Posterior cingulate gyrus (tissue), 11 donors: ENCODE measurements at regions of chr1 and their contacts with region 1.

Region 1: DNA sequence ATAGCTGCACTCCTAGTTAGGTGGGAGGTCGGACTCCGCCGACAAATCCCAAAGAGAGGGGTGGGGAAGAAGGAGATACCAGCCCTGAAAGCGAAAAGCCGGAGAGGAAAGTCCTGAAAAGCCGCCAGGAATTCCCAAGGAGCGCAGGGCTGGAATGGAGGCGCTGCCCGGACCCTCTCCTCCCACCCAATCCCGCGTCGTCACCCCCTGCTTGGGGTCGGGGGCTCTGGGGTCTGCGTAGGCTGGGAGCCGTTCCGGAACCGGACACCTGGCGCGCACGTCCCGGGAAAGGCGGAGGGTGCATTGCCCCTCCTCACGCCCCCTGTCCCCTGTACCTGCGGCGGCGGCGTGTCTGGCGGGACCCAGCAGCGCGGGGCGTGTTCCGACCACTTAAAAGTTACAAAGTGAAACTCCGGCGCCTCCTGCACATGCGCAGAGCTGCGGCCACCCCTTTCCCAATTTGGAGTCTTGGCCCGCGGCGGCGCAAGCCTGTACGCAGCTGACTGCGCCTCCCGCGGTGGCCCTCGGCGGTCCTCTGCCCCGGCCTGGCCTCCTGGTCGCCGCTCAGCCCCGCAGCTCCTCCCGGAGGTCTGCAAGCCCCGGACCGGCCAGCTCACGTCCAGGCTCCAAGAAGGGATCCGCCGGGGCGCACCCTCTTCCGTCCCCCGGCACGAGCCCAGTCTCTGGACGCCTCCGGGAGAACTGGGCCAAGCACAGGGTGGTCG is at the start of gene TMEM63A:
- DNase-seq: peak; percentile 81 to 97 (median 86)

Region 2: DNA sequence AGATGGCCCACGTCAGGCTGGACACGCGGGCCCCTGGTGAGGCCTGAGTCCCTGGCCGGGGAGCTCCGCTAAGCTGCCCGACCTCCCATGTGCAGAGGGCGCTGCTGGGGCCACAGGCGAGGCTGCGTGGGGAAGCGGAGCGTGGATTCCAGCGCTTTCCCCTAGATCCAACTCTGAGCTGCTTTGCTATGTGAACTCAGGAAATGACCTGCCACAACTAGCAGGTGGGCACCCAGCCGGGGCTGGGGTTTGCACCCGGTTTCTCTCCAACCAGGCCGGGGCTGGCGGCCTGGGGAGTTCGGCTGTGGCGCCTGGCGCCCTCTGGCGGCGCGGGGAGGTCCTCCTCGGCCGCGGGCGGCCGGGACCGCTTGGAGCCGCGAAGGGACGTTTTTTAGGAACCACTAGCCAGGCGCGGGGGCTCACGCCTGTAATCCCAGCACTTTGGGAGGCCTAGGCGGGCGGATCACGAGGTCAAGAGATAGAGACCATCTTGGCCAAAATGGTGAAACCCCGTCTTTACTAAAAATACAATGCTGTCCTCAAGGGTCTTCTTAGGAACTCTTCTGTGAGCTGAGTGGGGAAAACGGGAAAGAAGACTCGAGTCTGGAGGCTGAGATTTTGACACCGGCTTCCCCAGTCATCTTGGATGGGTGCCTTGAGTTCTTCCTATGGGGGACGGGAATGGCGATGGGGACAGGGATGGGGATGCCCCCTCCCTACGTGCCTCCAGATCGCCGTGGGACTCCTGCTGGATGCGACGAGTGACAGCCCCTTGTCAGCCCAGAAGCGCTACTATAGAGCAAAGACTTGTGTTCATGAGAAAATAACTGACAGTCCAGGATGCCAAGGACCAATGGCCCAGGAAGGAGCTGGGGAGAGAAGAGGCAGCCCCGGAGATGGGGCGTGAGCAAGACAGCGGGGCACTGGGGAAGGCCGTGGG is 29.3 kb after region 1 on chr1:
- intact Hi-C with region 1: no loop called
- DNase-seq: peak in 6 of 10 donors; percentile 39 to 94 (median 47)

Region 3: DNA sequence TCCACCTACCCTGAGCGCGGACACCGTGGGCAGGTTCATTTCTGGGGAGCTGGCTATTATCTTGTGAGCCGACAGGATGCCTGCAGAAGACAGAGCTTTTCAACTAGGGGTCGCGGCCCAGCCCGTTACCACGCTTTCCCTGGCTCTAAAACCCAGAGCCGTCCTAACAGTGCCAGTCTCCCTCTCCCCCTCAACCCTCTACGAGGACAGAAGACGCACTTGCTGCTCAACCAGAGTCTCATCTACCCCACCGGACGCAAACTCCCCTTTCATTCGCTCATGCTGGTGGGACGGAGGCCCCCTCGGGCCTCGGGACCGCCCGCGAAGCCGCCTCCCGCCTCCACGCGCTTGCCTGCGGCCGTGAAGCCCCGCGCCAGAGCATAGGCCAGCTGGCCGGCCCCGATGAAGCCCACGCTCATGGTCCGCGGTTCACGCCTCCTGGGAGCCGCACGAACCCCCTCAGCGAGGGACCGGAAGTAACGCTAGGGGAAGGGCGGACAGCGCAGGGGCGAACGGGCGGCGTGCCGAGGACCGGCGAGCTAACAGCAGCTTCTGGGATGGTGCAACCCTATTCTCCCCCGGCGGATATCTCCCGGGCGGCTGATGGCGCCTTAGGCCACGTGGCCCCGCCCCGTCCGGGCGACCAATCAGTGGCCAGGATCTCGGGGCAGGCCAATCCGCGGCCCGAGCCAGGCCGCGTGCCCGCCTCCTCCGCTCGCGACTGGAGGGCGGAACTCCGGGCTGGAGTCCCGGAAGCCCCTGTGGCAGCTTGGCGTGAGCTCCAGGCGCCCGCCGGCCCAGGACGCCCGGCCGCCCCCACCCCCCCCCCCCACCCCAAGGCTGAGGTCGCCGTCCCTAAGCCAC is 41.8 kb after region 1 on chr1 and contains the start of gene PYCR2:
- intact Hi-C with region 1: loop called (anchors 2 kb)
- DNase-seq: peak; percentile 91 to 99 (median 94)